K562 (cell line): ENCODE measurements at regions of chr4 and their contacts with region 1.

Region 1: GRCh38 chr4:34328939-34329338 is 1915.4 kb downstream of the ARAP2 start:
- DNase-seq: no peak
- ATAC-seq: no peak
- H3K4me3 ChIP-seq: no peak overlapping the region
- H3K27ac ChIP-seq: no peak overlapping the region
- H3K4me1 ChIP-seq: no peaks in the 10 kb centered on the region; a peak in 1 of 5 replicates
- H3K27me3 ChIP-seq: no peaks in the 10 kb centered on the region
- CTCF ChIP-seq: no peak
- EP300 ChIP-seq: no peak
- POLR2A ChIP-seq: no peak
- RAD21 ChIP-seq: no peak

Region 2: GRCh38 chr4:33650036-33650435 is 678.9 kb before region 1 on chr4:
- CTCF ChIA-PET with region 1: no interaction called
- POLR2A ChIA-PET with region 1: no interaction called
- in situ Hi-C with region 1: no loop called
- intact Hi-C with region 1: loop called (anchors 5 kb)
- DNase-seq: peak in 1 of 4 experiments; percentile 14
- ATAC-seq: peak; percentile 39; the same call in 2 of the 3 replicates
- H3K4me3 ChIP-seq: no peak overlapping the region
- H3K27ac ChIP-seq: peak overlapping the region; percentile 30; the same call in 1 of the 3 replicates
- H3K4me1 ChIP-seq: no peaks in the 10 kb centered on the region
- H3K27me3 ChIP-seq: no peaks in the 10 kb centered on the region
- CTCF ChIP-seq: no peak
- EP300 ChIP-seq: no peak
- POLR2A ChIP-seq: no peak
- RAD21 ChIP-seq: no peak

Region 3: DNA sequence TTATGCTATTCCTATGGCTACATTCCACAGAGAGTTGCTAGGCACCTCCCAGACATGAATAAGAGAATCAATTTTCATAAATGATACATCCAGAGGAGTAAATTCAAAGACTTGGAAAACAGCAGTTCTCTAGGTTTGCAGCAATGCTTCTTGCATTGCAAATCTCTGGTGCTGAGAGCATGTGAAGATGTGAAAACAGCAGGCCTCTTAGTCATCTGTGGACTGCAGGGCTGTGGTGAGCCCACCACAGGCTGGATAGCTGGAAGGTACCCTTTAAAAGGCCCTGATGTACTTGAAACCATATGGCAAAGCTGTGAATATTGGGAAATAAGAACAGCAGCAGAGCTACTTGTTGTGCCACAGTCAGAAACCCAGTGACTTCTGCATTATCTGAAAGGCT is 220.5 kb before region 1 on chr4:
- CTCF ChIA-PET with region 1: no interaction called
- POLR2A ChIA-PET with region 1: no interaction called
- in situ Hi-C with region 1: no loop called
- intact Hi-C with region 1: no loop called
- DNase-seq: no peak
- ATAC-seq: no peak
- H3K4me3 ChIP-seq: no peak overlapping the region
- H3K27ac ChIP-seq: no peak overlapping the region
- H3K4me1 ChIP-seq: no peaks in the 10 kb centered on the region
- H3K27me3 ChIP-seq: no peaks in the 10 kb centered on the region
- CTCF ChIP-seq: no peak
- EP300 ChIP-seq: no peak
- POLR2A ChIP-seq: no peak
- RAD21 ChIP-seq: no peak

Region 4: GRCh38 chr4:35108932-35109331 is 780.0 kb after region 1 on chr4:
- CTCF ChIA-PET with region 1: no interaction called
- POLR2A ChIA-PET with region 1: no interaction called
- in situ Hi-C with region 1: no loop called
- intact Hi-C with region 1: no loop called
- DNase-seq: no peak
- ATAC-seq: no peak
- H3K4me3 ChIP-seq: no peak overlapping the region
- H3K27ac ChIP-seq: no peak overlapping the region
- H3K4me1 ChIP-seq: no peaks in the 10 kb centered on the region
- H3K27me3 ChIP-seq: no peaks in the 10 kb centered on the region
- CTCF ChIP-seq: no peak
- EP300 ChIP-seq: no peak
- POLR2A ChIP-seq: no peak
- RAD21 ChIP-seq: no peak